Activated CD4-positive, alpha-beta memory T cell treated with anti-CD3 and anti-CD28 coated beads, Interleukin-2, amount 10 ng/mL, durations not matched to agents 7 days and 5 days (primary cell): ENCODE measurements at regions of chr22 and their contacts with region 1.

Region 1: GRCh38 chr22:39319270-39320022 is at the start of gene RPL3:
- DNase-seq: peak; percentile 96
- H3K4me3 Mint-ChIP-seq: peak within 1 kb of the TSS; percentile 95
- H3K27ac Mint-ChIP-seq: peak within 1 kb of the TSS; percentile 96
- H3K4me1 Mint-ChIP-seq: peaks cover 45% of the 10 kb centered on the region
- H3K27me3 Mint-ChIP-seq: no peaks in the 10 kb centered on the region
- total RNA-seq, gene RPL3: 1,526 to 1,529 TPM

Region 2: DNA sequence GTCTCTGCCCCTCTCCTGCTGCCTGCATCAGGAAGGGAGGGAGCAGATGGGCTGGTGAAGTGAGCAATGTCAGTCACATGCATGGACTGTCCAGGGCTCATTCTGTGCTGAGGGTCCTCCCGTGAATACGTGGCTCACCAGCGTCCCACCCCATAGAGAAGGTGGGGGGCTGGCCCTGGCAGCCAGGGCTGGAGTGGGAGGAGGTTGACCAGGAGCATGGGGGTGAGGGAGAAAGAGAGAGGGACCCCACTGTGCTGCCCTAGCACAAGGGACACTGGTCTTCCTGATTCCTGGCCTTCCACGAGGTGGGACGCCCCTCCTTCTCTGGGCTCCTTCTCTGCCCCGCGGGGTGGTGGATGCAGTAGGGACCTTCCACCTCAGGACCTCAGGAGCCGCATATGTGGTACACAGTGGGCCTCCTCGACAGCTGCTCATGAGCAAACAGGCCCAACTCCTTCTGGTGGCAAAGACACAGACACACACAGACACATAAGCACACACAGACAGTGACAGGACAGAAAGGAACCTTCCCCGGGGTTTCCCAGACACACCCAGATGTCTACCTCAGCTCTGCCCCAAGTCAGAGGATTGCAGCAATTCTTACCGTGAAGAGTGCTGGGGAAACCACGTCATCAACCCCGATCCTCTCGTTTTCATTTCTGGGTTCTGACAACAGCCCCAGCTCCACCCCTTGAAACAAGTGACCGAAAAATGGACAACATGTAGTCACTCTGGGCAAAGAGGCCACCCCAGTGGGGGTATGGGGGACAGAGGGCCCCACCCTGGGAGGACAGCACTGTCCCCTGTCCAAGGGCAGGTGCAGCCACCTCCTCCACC is 365.7 kb before region 1 on chr22:
- CTCF ChIA-PET with region 1: no interaction called
- POLR2A ChIA-PET with region 1: interaction called, 12 read pairs
- DNase-seq: peak; percentile 86
- H3K4me3 Mint-ChIP-seq: peak overlapping the region; percentile 52
- H3K27ac Mint-ChIP-seq: peak overlapping the region; percentile 82
- H3K4me1 Mint-ChIP-seq: peaks cover 48% of the 10 kb centered on the region
- H3K27me3 Mint-ChIP-seq: peaks cover 2% of the 10 kb centered on the region

Region 3: GRCh38 chr22:39175952-39176713 is 143.3 kb before region 1 on chr22:
- CTCF ChIA-PET with region 1: interaction called, 115 read pairs
- POLR2A ChIA-PET with region 1: interaction called, 134 read pairs
- DNase-seq: no peak
- H3K4me3 Mint-ChIP-seq: no peak overlapping the region
- H3K27ac Mint-ChIP-seq: no peak overlapping the region
- H3K4me1 Mint-ChIP-seq: peaks cover 55% of the 10 kb centered on the region
- H3K27me3 Mint-ChIP-seq: peaks cover 15% of the 10 kb centered on the region

Region 4: DNA sequence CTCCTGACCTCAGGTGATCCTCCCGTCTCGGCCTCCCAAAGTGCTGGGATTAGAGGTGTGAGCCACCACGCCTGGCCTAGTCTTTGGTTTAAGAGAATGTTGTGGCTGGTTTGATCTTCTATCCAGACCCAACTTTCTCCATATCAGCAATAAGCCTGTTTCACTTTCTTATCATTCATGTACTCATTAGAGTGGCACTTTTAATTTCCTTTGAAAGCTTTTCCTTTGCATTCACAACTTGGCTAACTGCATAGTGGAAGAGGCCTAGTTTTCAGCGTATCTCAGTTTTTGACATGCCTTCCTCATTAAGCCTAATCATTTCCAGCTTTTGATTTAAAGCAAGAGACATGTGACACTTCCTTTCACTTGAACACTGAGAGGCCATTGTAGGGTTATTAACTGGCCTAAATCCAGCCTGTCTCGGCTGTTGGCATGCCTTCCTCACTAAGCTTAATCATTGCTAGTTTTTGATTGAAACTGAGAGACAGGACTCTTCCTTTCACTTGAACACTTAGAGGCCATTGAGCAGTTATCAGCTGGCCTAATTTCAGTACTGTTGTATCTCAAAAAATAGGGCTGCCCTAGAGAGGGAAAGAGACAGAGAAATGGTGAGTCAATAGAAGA is 13.1 kb after region 1 on chr22:
- CTCF ChIA-PET with region 1: interaction called, 37 read pairs
- POLR2A ChIA-PET with region 1: interaction called, 32 read pairs
- DNase-seq: no peak
- H3K4me3 Mint-ChIP-seq: no peak overlapping the region
- H3K27ac Mint-ChIP-seq: no peak overlapping the region
- H3K4me1 Mint-ChIP-seq: peaks cover 9% of the 10 kb centered on the region
- H3K27me3 Mint-ChIP-seq: peaks cover 2% of the 10 kb centered on the region

Region 5: GRCh38 chr22:39405346-39406085 is 86.1 kb after region 1 on chr22:
- CTCF ChIA-PET with region 1: no interaction called
- POLR2A ChIA-PET with region 1: interaction called, 23 read pairs
- DNase-seq: no peak
- H3K4me3 Mint-ChIP-seq: no peak overlapping the region
- H3K27ac Mint-ChIP-seq: no peak overlapping the region
- H3K4me1 Mint-ChIP-seq: peaks cover 38% of the 10 kb centered on the region
- H3K27me3 Mint-ChIP-seq: no peaks in the 10 kb centered on the region

Region 6: GRCh38 chr22:39532215-39533071 is 213.0 kb after region 1 on chr22 and contains the start of gene RPS19BP1:
- CTCF ChIA-PET with region 1: interaction called, 41 read pairs
- POLR2A ChIA-PET with region 1: interaction called, 106 read pairs
- DNase-seq: peak; percentile 100
- H3K4me3 Mint-ChIP-seq: peak within 1 kb of the TSS; percentile 94
- H3K27ac Mint-ChIP-seq: peak within 1 kb of the TSS; percentile 86
- H3K4me1 Mint-ChIP-seq: peaks cover 59% of the 10 kb centered on the region
- H3K27me3 Mint-ChIP-seq: no peaks in the 10 kb centered on the region
- total RNA-seq, gene RPS19BP1: 54.3 to 60.7 TPM